ENCODE measurements at regions of chr12 and their contacts with region 1.

Region 1: GRCh38 chr12:113152835-113153814 is 3.6 kb downstream of the CFAP73 start:
- DNase-seq: peak; percentile 35
- H3K4me3 Mint-ChIP-seq: peak overlapping the region; percentile 65
- H3K27ac Mint-ChIP-seq: no peak overlapping the region
- H3K4me1 Mint-ChIP-seq: no peaks in the 10 kb centered on the region
- H3K27me3 Mint-ChIP-seq: peaks cover 24% of the 10 kb centered on the region

Region 2: DNA sequence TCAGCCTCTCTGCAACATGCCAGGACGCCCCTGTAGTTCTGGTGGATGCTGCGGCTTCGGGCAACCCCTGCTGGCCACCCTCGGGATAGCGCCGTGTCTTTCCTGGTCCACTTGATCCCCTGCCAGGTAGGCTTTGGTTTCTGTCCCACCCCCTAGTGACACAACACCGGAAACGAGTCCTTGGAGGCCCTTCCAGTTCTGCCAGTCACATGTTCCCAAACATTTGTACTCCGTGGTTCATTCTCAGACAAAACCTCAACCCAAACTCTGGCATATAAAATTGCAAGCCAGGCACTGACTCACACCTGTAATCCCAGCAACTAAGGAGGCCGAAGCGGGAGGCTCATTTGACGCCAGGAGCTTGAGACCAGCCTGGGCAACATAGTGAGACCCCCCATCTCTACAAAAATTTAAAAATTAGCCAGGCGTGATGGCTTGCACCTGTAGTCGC is 54.7 kb before region 1 on chr12:
- intact Hi-C with region 1: loop called (anchors 5 kb)
- DNase-seq: peak; percentile 24
- H3K4me3 Mint-ChIP-seq: no peak overlapping the region
- H3K27ac Mint-ChIP-seq: no peak overlapping the region
- H3K4me1 Mint-ChIP-seq: no peaks in the 10 kb centered on the region
- H3K27me3 Mint-ChIP-seq: no peaks in the 10 kb centered on the region

Region 3: DNA sequence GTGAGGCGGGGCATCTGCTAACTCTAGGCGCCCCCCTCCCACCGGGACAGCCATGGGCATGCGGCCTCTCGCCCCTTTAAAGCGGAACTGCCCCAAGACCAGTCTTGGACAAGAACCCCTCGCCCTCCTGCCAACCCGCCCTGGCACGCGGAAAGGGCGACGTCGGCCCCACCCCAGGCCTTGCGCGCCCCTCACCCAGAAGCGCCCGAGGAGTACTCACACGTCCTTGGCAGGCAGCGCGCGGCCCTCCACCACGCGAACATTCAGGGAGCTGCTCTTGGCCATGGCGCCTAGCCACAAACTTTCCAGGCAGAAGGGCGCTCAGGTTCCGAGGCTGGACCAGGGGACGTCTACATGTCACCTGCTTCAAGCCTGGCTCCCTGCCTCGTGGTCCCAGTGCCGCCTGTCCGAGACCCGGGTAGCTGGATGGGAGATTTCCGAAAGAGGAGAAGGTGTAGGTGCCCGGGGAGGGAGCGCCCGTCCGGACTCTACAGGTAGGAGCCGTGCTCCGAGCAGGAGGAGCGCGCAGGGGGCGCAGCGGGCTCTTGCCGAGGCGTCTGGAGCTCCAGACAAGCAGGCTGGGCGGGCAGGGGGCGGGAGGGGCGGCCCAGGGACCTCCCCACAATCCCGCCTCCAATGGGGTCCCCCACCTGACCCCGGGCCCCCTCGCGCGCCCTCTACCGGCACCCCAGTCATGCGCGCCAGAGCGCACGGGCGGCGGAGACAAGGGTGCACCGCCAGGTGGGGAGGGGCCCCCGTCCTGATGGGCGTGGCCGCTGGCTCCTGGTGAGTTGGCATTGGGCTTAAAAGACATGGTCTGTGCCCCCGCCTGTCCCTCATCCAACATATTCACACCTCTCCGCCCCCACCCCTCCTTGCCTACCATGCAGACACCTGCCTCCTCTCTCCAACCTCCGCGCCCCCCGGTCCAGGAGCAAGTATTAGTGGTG is 17.7 kb before region 1 on chr12 and contains the start of gene RASAL1:
- intact Hi-C with region 1: loop called (anchors 2 kb)
- DNase-seq: peak; percentile 54
- H3K4me3 Mint-ChIP-seq: peak within 1 kb of the TSS; percentile 77
- H3K27ac Mint-ChIP-seq: peak within 1 kb of the TSS; percentile 51
- H3K4me1 Mint-ChIP-seq: peaks cover 10% of the 10 kb centered on the region
- H3K27me3 Mint-ChIP-seq: peaks cover 16% of the 10 kb centered on the region
- total RNA-seq, gene RASAL1: 0.10 and 0.34 TPM in 2 replicates